A549 (cell line): ENCODE measurements at regions of chr19 and their contacts with region 1.

Region 1: DNA sequence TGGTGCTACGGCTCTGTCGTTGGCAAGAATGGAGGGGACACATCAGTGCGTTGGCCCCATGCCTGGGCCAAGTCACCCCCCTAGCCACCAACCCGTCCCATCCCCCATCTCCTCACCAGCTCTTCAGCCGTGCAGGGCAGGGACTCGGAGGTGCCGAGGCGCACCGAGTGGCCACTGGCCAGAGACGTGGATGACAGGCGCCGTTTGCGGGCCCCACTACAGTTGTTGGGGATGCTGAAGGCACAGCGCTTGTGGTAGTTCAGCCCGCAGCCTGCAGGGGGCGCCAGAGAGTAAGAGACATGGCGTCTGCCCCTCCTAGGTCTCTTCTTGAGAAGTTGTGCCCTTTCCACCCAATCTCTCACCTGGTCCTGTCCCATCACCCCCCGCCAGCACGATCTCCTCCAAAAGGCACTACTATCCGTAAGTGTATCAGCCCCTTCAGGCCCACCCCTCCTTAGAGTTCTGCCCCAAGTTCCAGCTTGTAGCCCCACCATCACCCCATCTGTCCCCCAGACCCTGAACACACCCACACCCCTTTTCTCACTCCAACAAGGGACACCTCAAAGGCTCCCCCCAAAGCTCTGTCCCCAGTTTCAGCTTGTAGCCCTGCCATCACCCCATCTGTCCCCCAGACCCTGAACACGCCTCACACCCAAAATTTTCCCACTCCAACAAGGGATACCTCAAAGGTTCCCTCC is 12.4 kb downstream of the PRKD2 start:
- DNase-seq: peak; percentile 64 to 90
- ATAC-seq: peak; percentile 80 to 90
- H3K4me3 ChIP-seq: no peak overlapping the region
- H3K27ac ChIP-seq: no peak overlapping the region
- H3K4me1 ChIP-seq: no peaks in the 10 kb centered on the region
- CTCF ChIP-seq: peak; percentile 88
- EP300 ChIP-seq: no peak
- POLR2A ChIP-seq: no peak
- RAD21 ChIP-seq: peak; percentile 44 to 62

Region 2: DNA sequence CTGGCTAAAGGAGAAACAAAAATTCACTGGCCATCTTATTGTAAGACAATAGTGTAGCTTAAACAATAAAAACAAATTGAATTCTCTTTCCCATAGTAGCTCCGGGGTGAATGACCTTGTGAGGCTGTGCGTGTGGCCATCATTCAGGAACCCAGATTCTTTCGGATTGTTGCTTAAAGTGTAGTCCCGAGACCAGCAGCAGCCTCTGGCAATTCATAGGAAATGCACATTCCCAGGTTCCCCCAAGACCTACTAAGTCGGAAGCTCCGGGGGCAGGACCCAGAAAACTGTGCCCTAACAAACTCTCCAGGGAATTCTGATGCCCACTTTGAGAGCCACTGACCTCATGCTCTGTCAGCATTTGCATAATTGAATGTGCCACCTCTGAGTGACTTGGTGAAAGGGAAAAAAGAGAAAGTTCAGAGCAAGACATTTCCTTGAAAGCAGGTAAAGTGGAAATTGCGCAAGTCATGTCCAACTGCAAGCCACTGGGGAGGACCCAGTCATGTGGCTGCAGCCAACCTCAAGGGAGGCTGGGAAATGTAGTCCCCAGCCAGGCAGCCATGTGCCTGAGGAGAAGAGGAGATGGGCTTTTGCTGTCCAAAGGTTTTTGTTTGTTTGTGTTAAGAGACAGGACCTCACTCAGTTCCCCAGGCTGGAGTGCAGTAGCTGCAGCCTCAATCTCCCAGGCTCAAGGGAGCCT is 158.2 kb before region 1 on chr19:
- CTCF ChIA-PET with region 1: no interaction called
- POLR2A ChIA-PET with region 1: no interaction called
- DNase-seq: peak; percentile 33 to 61
- ATAC-seq: peak; percentile 67 to 72; a peak in 4 of 6 replicates
- H3K4me3 ChIP-seq: no peak overlapping the region
- H3K27ac ChIP-seq: no peak overlapping the region
- H3K4me1 ChIP-seq: no peaks in the 10 kb centered on the region
- CTCF ChIP-seq: no peak
- EP300 ChIP-seq: no peak
- POLR2A ChIP-seq: no peak
- RAD21 ChIP-seq: no peak

Region 3: DNA sequence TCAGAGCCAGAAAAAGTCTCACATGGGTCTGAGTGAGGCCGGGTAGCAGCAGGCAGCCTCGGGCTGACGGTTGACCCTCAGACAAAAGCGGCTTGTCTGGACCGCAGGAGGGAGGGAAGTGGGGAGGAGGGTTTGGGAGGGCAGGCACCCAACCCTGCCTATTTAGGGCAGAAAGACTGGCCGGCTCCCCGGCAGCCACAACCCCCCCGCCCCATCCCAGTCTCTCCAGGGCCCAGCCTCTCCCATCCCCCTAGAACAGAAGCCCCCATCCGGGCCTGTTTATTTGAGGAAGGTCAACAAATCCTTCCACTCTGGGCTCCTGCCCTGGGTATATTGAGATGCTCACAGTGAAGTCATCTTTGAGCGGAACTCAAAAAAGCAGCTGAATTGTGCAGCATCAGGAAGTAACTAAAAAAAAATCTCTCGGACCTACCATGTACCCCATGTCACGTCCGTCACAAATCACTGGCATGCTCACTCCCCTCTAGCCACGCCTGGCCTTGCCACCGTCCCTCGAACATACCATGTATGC is 49.8 kb before region 1 on chr19:
- CTCF ChIA-PET with region 1: interaction called, 11 read pairs
- POLR2A ChIA-PET with region 1: no interaction called
- DNase-seq: no peak
- ATAC-seq: no peak
- H3K4me3 ChIP-seq: no peak overlapping the region
- H3K27ac ChIP-seq: no peak overlapping the region
- H3K4me1 ChIP-seq: peaks cover 7% of the 10 kb centered on the region
- CTCF ChIP-seq: no peak
- EP300 ChIP-seq: no peak
- POLR2A ChIP-seq: no peak
- RAD21 ChIP-seq: no peak

Region 4: DNA sequence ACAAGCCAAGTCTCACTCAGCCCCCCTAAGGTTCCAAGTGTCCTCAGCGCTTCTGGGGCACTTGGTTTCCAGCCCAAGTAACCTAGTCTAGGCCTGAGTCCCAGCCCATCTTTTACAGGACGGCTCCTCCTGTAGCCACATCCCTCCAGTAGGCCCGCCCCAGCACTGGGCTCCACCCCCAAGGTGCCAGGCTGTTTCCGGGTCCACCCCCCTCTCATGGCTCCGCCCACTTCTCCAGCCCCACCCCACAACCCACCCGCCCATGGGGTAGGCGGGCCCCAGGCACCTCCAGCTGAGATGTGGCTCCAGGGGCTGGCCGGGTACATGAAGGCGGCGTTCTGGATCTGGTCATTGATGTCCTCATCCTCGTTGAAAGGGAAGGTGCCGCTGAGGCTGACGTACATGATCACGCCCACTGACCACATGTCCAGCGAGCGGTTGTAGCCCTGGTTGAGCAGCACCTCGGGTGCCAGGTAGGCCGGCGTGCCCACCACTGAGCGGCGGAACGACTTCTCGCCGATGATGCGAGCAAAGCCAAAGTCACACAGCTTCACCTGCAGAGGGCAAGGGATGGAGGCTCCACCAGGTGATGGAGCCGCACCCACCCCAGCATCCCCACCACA is 26.3 kb before region 1 on chr19:
- CTCF ChIA-PET with region 1: interaction called, 48 read pairs
- POLR2A ChIA-PET with region 1: no interaction called
- DNase-seq: peak; percentile 64
- ATAC-seq: peak; percentile 64 to 84
- H3K4me3 ChIP-seq: no peak overlapping the region
- H3K27ac ChIP-seq: no peak overlapping the region
- H3K4me1 ChIP-seq: no peaks in the 10 kb centered on the region
- CTCF ChIP-seq: no peak
- EP300 ChIP-seq: no peak
- POLR2A ChIP-seq: no peak
- RAD21 ChIP-seq: no peak

Region 5: GRCh38 chr19:46687438-46688145 is 16.9 kb before region 1 on chr19:
- CTCF ChIA-PET with region 1: interaction called, 73 read pairs
- POLR2A ChIA-PET with region 1: no interaction called
- DNase-seq: no peak
- ATAC-seq: no peak
- H3K4me3 ChIP-seq: no peak overlapping the region
- H3K27ac ChIP-seq: no peak overlapping the region
- H3K4me1 ChIP-seq: no peaks in the 10 kb centered on the region
- CTCF ChIP-seq: no peak
- EP300 ChIP-seq: no peak
- POLR2A ChIP-seq: no peak
- RAD21 ChIP-seq: no peak

Region 6: DNA sequence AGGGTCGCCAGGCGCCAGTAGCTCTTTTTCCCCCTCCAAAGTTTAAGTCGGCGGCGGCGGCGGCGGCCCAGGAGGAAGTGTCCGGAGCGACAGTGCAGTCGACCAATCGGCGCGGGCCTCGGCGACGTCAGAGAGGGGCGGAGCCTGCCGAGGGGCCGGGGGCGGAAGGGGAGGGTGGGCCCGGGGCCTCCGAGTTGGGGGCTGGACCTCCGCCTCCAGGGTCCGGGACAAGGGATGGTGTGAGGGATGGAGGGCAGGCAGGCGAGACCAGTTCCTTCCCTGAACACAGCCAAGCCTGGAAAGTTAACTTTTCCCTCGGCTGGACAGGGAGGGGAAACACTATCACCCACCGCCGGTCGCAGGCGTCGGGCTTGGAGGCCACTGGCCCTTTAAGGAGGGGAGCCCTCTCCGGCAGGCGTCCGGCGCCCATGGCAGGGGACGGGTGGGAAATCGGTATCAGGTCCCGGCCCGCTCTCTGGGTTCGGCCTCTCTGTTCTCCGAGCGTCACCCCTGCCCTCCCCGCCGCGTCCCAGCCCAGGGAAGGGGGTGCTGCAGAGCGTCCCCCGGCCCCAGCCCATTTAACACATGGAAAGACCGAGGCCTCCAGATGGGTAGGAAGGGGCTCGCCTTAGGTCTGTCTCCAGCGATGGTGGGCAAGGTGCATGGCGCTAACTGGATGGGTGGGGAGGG is 12.7 kb after region 1 on chr19 and contains the start of gene PRKD2:
- CTCF ChIA-PET with region 1: interaction called, 95 read pairs
- POLR2A ChIA-PET with region 1: interaction called, 3 read pairs
- DNase-seq: peak; percentile 83 to 90
- ATAC-seq: peak; percentile 60 to 82
- H3K4me3 ChIP-seq: peak within 1 kb of the TSS; percentile 88
- H3K27ac ChIP-seq: peak within 1 kb of the TSS; percentile 84 to 90
- H3K4me1 ChIP-seq: peaks cover 25% of the 10 kb centered on the region
- CTCF ChIP-seq: no peak
- EP300 ChIP-seq: no peak
- POLR2A ChIP-seq: peak; percentile 50; the same call in 1 of the 2 replicates
- RAD21 ChIP-seq: no peak
- polyA plus RNA-seq, gene PRKD2: 8.3 and 10.4 TPM in 2 replicates

Region 7: GRCh38 chr19:46722796-46723461 is 18.4 kb after region 1 on chr19:
- CTCF ChIA-PET with region 1: interaction called, 102 read pairs
- POLR2A ChIA-PET with region 1: no interaction called
- DNase-seq: no peak
- ATAC-seq: no peak
- H3K4me3 ChIP-seq: no peak overlapping the region
- H3K27ac ChIP-seq: no peak overlapping the region
- H3K4me1 ChIP-seq: peaks cover 2% of the 10 kb centered on the region
- CTCF ChIP-seq: no peak
- EP300 ChIP-seq: no peak
- POLR2A ChIP-seq: no peak
- RAD21 ChIP-seq: no peak

Region 8: DNA sequence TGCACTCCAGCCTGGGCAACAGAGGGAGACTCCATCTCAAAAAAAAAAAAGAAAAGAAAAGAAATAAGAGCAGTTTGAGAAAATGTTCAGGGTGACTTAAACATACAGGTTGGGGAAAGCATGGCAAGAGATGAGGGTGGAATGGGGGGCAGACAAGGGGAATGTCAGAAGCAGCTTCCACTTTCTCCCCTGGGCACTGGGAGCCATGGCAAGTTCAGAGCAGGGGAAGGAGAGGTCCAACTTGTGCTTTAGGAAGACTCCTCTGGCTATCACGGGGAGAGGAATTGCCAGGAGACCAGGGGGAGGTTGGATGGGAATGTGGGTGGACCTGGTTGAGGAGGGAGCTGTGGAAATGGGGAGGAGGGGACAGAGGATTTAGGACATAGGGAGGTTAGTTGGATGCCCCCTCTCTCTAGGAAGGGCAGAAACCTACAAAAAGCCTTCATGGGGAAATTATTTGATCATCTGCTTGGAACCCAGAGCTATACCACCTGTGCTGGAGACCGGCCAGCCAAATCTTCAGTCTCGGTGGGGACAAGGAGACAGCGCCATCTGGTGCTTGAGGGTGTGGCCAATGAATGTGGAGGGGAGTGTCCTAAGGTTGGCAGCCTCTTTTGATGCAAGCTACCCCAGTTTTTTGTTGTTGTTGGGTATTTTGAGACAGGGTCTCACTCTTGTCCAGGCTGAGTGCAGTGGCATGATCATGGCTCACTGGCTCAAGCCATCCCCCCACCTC is 49.1 kb after region 1 on chr19:
- CTCF ChIA-PET with region 1: interaction called, 24 read pairs
- POLR2A ChIA-PET with region 1: no interaction called
- DNase-seq: peak; percentile 64 to 79
- ATAC-seq: peak; percentile 22 to 45; a peak in 3 of 6 replicates
- H3K4me3 ChIP-seq: no peak overlapping the region
- H3K27ac ChIP-seq: no peak overlapping the region
- H3K4me1 ChIP-seq: peaks cover 4% of the 10 kb centered on the region; the same call in 1 of the 3 replicates
- CTCF ChIP-seq: peak; percentile 65
- EP300 ChIP-seq: no peak
- POLR2A ChIP-seq: no peak
- RAD21 ChIP-seq: peak in 1 of 2 experiments; percentile 46; a peak in 1 of 5 replicates

Region 9: GRCh38 chr19:47370045-47370611 is 665.6 kb after region 1 on chr19:
- CTCF ChIA-PET with region 1: no interaction called
- POLR2A ChIA-PET with region 1: no interaction called
- DNase-seq: no peak
- ATAC-seq: peak; percentile 12 to 35; a peak in 1 of 6 replicates
- H3K4me3 ChIP-seq: no peak overlapping the region
- H3K27ac ChIP-seq: 0 out of 6 replicates have a peak overlapping the region, but pooled peaks of 1 of the 2 experiments have one; percentile 14
- H3K4me1 ChIP-seq: peaks cover 7% of the 10 kb centered on the region; the same call in 1 of the 3 replicates
- CTCF ChIP-seq: no peak
- EP300 ChIP-seq: no peak
- POLR2A ChIP-seq: no peak
- RAD21 ChIP-seq: no peak